H1 (cell line): ENCODE measurements at regions of chr1 and their contacts with region 1.

Region 1: GRCh38 chr1:28756846-28757245 is 20.1 kb downstream of the YTHDF2 start:
- DNase-seq: no peak
- H3K4me3 ChIP-seq: no peak overlapping the region
- H3K27ac ChIP-seq: no peak overlapping the region
- H3K4me1 ChIP-seq: peaks cover 0 to 9% (median 1%) of the 10 kb centered on the region in 4 experiments; a peak in 2 of 7 replicates
- H3K27me3 ChIP-seq: no peaks in the 10 kb centered on the region
- CTCF ChIP-seq: peak in 2 of 3 experiments; percentile 15 to 51; a peak in 2 of 4 replicates
- EP300 ChIP-seq: no peak
- POLR2A ChIP-seq: no peak
- RAD21 ChIP-seq: peak in 1 of 2 experiments; percentile 37; a peak in 2 of 4 replicates

Region 2: GRCh38 chr1:28775121-28775944 is 18.5 kb after region 1 on chr1:
- CTCF ChIA-PET with region 1: interaction called, 9 read pairs
- POLR2A ChIA-PET with region 1: interaction called, 49 read pairs
- DNase-seq: peak in 1 of 2 experiments; percentile 67
- H3K4me3 ChIP-seq: no peak overlapping the region
- H3K27ac ChIP-seq: no peak overlapping the region
- H3K4me1 ChIP-seq: no peaks in the 10 kb centered on the region
- H3K27me3 ChIP-seq: no peaks in the 10 kb centered on the region
- CTCF ChIP-seq: no peak
- EP300 ChIP-seq: no peak
- POLR2A ChIP-seq: no peak
- RAD21 ChIP-seq: no peak

Region 3: DNA sequence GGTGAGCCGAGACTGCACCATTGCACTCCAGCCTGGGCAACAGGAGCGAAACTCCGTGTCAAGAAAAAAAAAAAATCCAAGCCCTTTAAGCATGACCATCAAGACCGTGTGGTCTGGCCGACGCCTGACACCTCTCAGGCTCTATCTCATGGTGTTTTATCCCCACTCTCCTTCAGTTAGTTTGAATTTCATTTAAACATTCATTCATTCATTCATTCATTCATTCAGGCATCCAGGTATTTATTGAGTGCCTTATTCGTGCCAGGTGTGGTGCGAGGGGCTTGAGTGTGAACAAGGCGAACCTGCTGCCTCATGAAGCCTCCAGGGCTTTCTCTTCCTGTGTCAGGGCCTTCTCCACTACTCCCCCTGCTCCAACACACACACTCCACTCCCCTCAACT is 32.6 kb after region 1 on chr1:
- CTCF ChIA-PET with region 1: no interaction called
- POLR2A ChIA-PET with region 1: no interaction called
- DNase-seq: no peak
- H3K4me3 ChIP-seq: no peak overlapping the region
- H3K27ac ChIP-seq: no peak overlapping the region
- H3K4me1 ChIP-seq: peaks cover 0 to 3% (median 0%) of the 10 kb centered on the region in 4 experiments; a peak in 1 of 7 replicates
- H3K27me3 ChIP-seq: no peaks in the 10 kb centered on the region
- CTCF ChIP-seq: no peak
- EP300 ChIP-seq: no peak
- POLR2A ChIP-seq: no peak
- RAD21 ChIP-seq: no peak